Aorta (tissue), 5 donors: ENCODE measurements at regions of chr6 and their contacts with region 1.

Region 1: GRCh38 chr6:3125815-3126214 is 7.3 kb downstream of the BPHL start:
- DNase-seq: no peak
- ATAC-seq: no peak
- H3K4me3 ChIP-seq: no peak overlapping the region
- H3K27ac ChIP-seq: no peak overlapping the region
- H3K4me1 ChIP-seq: no peaks in the 10 kb centered on the region
- H3K27me3 ChIP-seq: no peaks in the 10 kb centered on the region

Region 2: DNA sequence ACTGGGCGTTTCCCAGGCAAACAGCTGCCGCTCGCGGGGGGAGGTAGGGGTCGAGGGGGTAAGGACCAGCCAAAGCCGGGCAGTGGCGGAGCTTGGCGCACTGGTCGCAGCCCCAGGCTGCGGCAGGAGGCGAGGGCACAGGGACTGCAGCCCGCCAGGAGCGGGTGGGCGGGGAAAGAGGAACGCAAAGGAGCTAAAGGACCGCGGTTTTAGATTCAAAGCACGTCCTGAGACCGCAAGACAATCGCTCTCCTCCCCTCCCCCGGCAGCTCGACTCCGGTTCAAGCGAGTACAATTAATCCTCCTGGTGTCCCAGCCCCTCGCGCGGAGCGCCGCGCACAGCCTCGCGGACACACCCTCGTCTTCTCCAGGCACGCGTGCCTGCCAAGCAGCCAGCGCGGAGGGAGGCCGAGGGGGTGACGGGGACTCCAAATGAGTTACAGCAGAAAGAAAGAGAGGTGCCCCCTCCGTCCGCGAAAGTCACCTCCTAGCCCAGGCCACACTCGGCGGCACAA is 101.1 kb after region 1 on chr6:
- intact Hi-C with region 1: no loop called
- DNase-seq: peak in 1 of 2 donors; percentile 83
- ATAC-seq: peak; percentile 16
- H3K4me3 ChIP-seq: peak overlapping the region in 1 of 2 donors; percentile 25
- H3K27ac ChIP-seq: no peak overlapping the region
- H3K4me1 ChIP-seq: no peaks in the 10 kb centered on the region
- H3K27me3 ChIP-seq: no peaks in the 10 kb centered on the region

Region 3: DNA sequence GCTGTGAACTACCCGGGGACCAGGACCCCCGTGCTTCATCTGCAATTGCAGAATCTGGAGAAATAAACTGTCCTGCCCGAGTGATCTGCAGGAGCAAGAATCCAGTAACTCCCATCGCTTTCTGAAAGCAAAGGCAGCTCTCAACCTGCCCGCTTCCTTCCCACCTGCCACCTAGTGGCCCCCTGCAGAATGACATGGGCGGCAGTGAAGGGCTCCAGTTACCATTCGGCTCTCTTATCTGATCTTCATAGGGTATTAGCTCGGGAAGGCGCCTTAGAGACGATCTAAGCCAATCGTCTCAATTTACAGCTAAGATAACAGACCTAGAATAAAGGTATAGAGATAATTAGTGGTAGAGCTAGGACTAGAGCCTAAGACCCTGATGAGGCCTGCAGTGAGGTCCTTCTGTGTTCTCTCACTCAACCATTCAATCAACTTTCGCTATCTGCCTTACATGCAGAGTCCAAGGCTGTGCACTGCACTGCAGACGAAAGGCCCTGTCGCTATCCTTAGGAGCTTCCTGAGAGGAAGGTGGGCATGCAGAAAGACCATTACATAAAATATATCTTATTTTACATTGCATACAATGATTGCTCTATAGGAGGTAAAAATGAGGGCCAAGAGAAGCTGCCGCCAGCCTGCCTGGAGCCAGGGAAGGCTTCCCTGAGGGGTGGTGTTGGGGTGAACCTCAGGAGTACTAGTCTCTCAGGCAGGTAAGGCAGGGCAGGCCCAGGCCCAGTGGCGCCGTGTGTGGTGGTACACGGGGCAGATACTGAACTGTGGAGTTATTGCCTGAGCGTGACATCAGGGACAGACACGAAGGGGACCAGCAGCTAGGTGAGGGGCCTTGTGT is 125.9 kb after region 1 on chr6:
- intact Hi-C with region 1: loop called (anchors 2 kb)
- DNase-seq: peak; percentile 86 to 94
- ATAC-seq: peak; percentile 81
- H3K4me3 ChIP-seq: no peak overlapping the region
- H3K27ac ChIP-seq: no peak overlapping the region
- H3K4me1 ChIP-seq: no peaks in the 10 kb centered on the region
- H3K27me3 ChIP-seq: no peaks in the 10 kb centered on the region

Region 4: DNA sequence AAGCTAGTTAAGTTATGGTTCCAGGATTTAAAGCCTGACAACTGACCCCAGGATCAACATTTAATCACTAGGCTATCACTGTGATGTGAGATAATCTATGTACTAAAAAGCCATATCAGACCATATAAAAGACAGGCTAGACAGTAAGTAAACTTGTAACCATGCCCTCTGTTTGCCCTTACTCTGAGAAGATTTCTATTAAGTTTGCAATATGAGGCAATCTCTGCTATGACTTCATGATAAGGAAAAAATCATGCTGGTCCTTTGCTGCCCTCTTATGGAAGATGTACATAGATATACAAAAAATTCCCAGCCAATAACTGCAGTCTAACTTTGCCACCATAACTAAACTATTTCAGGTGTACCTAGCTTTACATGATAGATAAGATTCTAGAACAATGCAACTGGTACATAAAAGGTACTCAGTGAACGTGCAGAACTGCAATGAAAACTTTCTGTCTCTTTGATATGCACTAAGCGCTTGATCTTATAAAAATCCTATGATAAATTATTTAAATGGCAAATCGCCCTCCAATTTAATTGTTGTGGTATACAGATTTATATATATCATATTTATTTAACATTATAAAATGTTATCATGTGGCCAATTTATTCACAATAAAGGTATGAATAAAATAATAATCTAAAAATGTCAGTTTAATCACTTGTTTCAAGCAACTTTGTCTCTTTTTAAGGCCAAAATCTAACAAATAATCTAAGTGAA is 882.7 kb after region 1 on chr6:
- intact Hi-C with region 1: loop called in 1 of 2 experiments (anchors 10 kb)
- DNase-seq: no peak
- ATAC-seq: peak; percentile 86
- H3K4me3 ChIP-seq: no peak overlapping the region
- H3K27ac ChIP-seq: no peak overlapping the region
- H3K4me1 ChIP-seq: no peaks in the 10 kb centered on the region
- H3K27me3 ChIP-seq: no peaks in the 10 kb centered on the region